ENCODE measurements at regions of chr7 and their contacts with region 1.

Region 1: DNA sequence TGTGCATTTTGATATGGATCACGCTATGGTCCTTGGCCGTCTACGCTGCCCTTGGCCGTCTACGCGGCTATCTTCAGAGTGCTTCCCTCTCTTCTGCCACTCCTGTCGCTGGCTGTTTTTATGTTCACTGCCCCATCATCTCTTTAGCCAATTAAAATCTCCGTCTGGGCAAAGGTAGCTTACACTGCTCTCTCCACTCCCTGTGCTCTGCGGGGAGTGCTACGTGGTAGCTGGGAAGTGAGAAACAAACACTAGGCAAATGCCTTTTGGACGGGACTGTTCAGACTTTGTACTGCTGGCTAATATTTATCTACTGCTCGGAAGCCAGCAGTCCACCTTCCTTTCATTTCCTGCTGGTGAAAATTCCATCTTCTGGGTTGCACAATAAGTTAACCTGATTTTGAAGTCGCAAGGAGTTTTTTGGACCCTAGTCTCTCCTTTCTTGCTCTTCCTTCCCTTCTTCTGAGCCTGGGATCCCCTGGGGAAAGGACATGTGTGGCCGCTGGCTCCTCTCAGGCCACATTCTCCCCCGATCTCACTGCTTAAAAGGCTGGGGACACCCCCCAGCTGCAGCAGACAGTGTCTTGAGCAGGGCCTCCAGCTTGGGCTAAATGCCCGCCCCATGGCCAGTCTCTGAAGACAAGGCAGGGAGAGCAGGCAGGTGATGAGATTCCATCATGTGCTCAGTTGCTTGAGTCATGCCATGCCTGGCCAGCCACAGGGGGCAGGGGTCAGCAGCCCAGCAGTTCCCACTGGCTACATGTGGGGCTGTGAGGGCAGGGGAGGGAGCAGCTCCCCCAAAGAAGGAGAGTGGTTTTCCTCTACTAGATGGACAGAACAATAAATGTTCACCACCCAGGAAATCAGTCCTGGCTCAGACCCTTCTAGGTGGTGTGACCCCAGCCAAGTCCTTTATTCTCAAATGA is 25.5 kb upstream of the RBM33 start:
- ATAC-seq: peak in 1 of 8 experiments; percentile 34
- H3K4me3 ChIP-seq: no peak overlapping the region
- H3K27ac ChIP-seq: no peak overlapping the region
- H3K4me1 ChIP-seq: no peaks in the 10 kb centered on the region

Region 2: GRCh38 chr7:155510975-155511701 is 107.8 kb before region 1 on chr7:
- in situ Hi-C with region 1: no loop called
- ATAC-seq: no peak
- H3K4me3 ChIP-seq: no peak overlapping the region
- H3K27ac ChIP-seq: no peak overlapping the region
- H3K4me1 ChIP-seq: peaks cover 0 to 5% of the 10 kb centered on the region in 2 donors

Region 3: DNA sequence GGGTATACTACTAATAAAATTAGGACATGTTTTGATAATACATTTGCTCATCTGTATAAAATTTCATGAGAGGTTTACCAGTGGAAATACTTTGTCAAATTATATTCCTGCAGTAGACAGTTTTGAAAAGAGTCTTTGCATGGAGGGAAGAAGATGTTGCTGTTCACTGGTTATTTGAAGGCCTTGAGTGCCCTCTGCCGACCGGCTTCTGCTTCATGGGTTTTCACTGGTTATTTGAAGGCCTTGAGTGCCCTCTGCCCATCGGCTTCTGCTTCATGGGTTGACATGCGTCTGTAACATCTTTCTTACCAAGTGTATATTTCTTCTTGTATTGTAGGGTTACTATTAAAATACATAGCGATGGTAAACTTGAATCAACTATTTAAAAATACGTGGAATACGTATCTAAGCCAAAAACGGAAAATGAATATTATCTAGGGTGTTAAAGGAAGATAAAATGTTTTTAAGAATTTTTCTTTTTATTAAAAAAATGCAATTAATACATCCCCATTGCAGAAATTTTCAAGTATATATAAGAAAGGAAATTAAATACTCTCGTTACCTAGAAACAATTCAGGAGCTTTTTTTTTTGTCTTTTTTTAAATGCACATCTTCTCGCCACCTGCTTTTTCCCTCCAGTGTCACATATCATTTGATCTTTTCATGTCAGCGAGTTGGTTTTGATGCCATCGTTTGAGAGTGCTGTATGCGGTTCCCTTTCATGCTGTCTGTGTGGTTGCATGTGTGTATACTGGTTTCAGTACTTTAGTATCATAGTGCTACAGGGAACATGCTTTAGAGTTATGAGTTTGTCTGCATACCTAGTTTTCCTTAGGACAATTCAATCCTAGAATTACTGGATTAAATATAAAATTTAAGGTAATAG is 119.9 kb after region 1 on chr7:
- in situ Hi-C with region 1: loop called in 1 of 9 experiments (anchors 25 kb)
- ATAC-seq: peak in 6 of 8 experiments; percentile 32 to 91 (median 79)
- H3K4me3 ChIP-seq: no peak overlapping the region
- H3K27ac ChIP-seq: no peak overlapping the region
- H3K4me1 ChIP-seq: no peaks in the 10 kb centered on the region

Measured in motor neuron (in vitro differentiated cells).